RWPE1 (cell line): ENCODE measurements at regions of chr4 and their contacts with region 1.

Region 1: DNA sequence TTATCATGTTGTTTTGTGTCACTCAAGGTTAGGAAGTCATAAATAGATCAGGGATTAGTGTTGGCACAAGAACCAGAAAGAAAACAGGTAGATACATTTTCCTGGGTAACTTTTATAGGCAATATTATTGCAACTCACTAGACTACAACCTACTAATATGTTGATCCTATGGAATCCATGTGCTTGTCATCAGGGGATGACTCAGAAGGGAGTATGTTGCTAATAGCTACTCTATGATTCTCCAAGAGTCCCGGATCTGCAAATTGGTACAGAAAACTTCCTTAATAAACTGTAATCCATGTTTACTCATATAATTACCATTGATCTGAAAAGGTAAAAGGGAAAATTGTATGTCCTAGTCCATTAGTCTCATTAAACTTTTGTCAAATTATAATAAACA is 11.7 kb upstream of the GNRHR start:
- DNase-seq: peak; percentile 33
- H3K27ac ChIP-seq: no peak overlapping the region
- CTCF ChIP-seq: no peak

Region 2: DNA sequence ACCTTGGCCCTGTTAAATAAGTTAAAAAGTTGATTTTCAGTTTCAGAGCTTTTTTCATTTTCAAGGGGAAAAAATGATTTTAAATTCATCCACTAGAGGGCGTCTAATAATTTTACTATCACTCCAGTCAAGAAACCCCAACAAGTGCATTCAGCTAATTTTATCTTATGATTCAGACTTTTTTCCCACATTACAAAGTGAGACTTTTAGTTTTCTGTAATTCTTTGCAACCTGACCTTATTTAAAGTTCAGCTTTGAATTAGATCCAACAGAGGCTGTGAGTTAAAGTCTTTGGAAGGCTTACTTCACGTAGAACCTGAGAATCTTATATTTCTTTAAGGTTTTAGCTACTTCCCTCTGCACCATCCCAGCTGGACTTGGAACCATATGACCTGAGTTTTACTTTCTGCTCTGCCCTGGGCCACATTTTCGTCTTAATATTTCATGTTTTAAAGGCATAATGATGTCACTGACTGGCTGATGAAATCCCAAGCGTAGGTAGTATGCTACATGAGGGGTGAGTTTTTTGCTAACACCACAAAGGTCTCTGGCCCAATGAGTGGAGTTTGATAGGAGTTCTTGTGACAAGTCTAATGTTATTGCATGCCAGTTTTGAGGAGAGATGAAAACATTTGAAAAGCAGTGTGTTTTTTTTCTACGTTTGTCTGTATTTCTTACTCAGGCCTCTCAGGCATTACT is 19.0 kb before region 1 on chr4:
- CTCF ChIA-PET with region 1: interaction called, 11 read pairs
- POLR2A ChIA-PET with region 1: no interaction called
- DNase-seq: no peak
- H3K27ac ChIP-seq: no peak overlapping the region
- CTCF ChIP-seq: peak; percentile 69